BJ (cell line): ENCODE measurements at regions of chr1 and their contacts with region 1.

Region 1: DNA sequence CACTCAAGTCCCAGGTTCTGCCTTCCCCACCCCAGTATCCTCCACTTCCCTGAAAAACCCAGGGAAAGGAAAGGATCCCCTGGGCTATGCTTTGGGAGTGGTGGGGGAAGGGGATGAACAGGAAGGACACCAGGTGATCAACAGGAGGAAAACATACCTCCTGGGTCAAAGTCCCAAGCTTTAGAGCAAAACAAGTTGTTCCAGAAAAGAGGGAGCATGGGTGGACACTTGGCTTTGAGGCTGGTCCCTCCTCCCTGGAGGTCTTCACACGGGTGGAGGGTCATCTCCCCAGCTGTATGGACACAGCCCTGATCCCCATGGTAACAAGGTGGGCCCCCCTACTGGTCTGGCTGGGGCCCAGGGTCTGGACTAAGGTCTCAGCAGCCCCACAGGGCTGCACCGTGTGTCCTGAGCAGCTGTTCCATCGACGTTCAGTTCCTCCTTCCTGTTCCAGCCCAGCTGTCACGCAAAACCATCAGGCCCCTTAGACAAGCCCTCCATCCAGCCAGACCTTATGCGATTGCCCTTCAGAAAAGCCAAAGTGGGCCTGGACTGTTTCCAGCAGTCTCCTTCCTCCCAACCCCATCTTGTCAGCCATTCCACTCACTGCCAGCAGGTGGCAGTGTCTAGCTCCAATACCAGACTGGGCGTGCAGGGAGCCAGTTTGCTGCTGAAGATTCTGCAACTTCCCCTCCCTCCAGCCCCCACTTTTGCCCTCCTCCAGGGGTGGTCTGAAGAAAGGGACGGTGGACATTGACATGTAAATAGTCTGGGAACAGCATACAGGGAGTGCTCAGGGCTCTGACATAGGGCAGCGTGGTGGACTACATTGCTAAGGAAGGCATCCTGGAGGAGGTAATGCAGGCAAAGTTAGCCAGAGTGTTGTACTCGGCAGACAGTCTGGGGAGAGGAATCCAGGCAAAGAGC is 2.9 kb upstream of the PDZK1IP1 start:
- DNase-seq: no peak
- H3K4me3 ChIP-seq: no peak overlapping the region
- H3K27me3 ChIP-seq: peaks cover 4% of the 10 kb centered on the region; the same call in 1 of the 2 replicates
- CTCF ChIP-seq: peak; percentile 97

Region 2: GRCh38 chr1:47207811-47208373 is 15.2 kb after region 1 on chr1:
- CTCF ChIA-PET with region 1: interaction called, 37 read pairs
- POLR2A ChIA-PET with region 1: no interaction called
- DNase-seq: no peak
- H3K4me3 ChIP-seq: no peak overlapping the region
- H3K27me3 ChIP-seq: peaks cover 11% of the 10 kb centered on the region
- CTCF ChIP-seq: no peak

Region 3: GRCh38 chr1:47219590-47220220 is 27.0 kb after region 1 on chr1:
- CTCF ChIA-PET with region 1: interaction called, 10 read pairs
- POLR2A ChIA-PET with region 1: no interaction called
- DNase-seq: no peak
- H3K4me3 ChIP-seq: no peak overlapping the region
- H3K27me3 ChIP-seq: peaks cover 29% of the 10 kb centered on the region
- CTCF ChIP-seq: no peak

Region 4: GRCh38 chr1:47262787-47263413 is 70.2 kb after region 1 on chr1:
- CTCF ChIA-PET with region 1: interaction called, 51 read pairs
- POLR2A ChIA-PET with region 1: no interaction called
- DNase-seq: no peak
- H3K4me3 ChIP-seq: no peak overlapping the region
- H3K27me3 ChIP-seq: no peaks in the 10 kb centered on the region
- CTCF ChIP-seq: peak; percentile 70

Region 5: GRCh38 chr1:47725992-47726855 is 533.5 kb after region 1 on chr1:
- CTCF ChIA-PET with region 1: interaction called, 10 read pairs
- POLR2A ChIA-PET with region 1: no interaction called
- DNase-seq: no peak
- H3K4me3 ChIP-seq: no peak overlapping the region
- H3K27me3 ChIP-seq: peaks cover 15% of the 10 kb centered on the region
- CTCF ChIP-seq: peak; percentile 95

Region 6: GRCh38 chr1:47818682-47819573 is 626.2 kb after region 1 on chr1:
- CTCF ChIA-PET with region 1: no interaction called
- POLR2A ChIA-PET with region 1: no interaction called
- DNase-seq: no peak
- H3K4me3 ChIP-seq: no peak overlapping the region
- H3K27me3 ChIP-seq: no peaks in the 10 kb centered on the region
- CTCF ChIP-seq: no peak